ENCODE measurements at regions of chr1 and their contacts with region 1.

Region 1: GRCh38 chr1:201559679-201560162 is 20.8 kb downstream of the NAV1 start:
- DNase-seq: peak; percentile 68
- H3K4me3 Mint-ChIP-seq: no peak overlapping the region
- H3K27ac Mint-ChIP-seq: no peak overlapping the region
- H3K4me1 Mint-ChIP-seq: peaks cover 9% of the 10 kb centered on the region
- H3K27me3 Mint-ChIP-seq: peaks cover 2% of the 10 kb centered on the region

Region 2: DNA sequence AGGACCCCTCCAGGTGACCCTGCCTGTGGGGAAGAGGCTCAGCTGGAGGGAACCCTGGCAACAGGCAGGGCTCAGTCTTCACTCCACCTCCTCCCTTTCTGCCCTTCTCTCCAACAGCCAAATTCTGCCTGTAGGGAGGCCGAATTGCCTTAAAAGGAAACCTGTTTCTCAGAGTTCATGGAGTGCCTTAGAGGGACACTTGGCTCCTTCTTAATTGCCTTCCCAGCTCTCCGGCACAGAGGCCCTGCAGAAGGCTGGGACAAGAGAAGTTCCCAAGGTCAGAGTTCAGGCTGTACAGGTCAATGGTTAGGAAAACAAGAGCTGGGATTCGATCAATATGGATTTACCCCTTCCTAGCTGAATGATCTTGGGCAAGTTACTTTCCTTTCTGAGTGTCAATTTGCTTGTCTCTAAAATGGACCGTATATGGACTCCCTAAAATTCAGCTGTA is 59.0 kb before region 1 on chr1:
- CTCF ChIA-PET with region 1: no interaction called
- POLR2A ChIA-PET with region 1: no interaction called
- DNase-seq: no peak
- H3K4me3 Mint-ChIP-seq: no peak overlapping the region
- H3K27ac Mint-ChIP-seq: no peak overlapping the region
- H3K4me1 Mint-ChIP-seq: peaks cover 25% of the 10 kb centered on the region
- H3K27me3 Mint-ChIP-seq: no peaks in the 10 kb centered on the region

Region 3: DNA sequence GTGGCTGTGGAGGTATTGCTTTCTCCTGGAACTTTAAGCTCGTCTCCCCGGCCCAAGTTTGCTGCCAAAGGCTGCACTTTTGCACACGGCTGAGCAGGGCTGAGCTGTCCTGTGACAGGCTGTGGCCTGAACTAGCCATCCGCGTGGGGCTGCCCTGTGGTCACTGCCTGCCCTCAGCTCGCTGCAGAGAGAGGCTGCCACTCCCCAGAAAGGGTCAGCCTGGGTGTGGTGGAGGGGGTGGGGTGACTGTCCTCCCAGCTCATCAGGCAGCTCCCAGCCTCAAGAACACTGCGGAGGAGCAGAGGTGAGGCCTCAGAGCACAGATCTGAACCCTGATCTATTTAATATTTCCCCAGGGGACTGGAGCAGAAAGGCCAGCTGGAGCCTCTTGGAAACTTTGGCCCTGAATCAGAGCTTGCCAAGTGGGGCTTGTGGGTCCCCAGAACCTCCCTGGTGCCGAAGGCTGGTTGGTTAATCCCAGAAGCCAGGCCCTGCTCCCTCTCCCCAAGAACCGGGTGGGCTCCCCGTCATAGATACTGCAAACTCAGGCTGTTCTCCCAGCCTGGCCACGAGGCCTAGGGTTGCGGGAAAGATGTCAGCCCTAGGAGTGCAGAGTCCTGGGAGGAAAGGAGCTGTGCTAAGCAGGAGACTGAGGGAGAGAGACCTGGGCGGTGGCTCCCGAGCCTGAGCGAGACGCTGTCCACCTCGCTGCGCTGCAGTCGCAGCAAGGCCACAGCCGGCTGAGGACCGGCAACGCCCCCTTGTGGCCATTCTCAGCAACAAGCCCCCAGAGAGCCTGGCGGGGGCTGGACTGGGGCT is 144.1 kb after region 1 on chr1:
- CTCF ChIA-PET with region 1: interaction called, 33 read pairs
- POLR2A ChIA-PET with region 1: no interaction called
- DNase-seq: peak; percentile 68
- H3K4me3 Mint-ChIP-seq: no peak overlapping the region
- H3K27ac Mint-ChIP-seq: no peak overlapping the region
- H3K4me1 Mint-ChIP-seq: no peaks in the 10 kb centered on the region
- H3K27me3 Mint-ChIP-seq: peaks cover 4% of the 10 kb centered on the region

Region 4: DNA sequence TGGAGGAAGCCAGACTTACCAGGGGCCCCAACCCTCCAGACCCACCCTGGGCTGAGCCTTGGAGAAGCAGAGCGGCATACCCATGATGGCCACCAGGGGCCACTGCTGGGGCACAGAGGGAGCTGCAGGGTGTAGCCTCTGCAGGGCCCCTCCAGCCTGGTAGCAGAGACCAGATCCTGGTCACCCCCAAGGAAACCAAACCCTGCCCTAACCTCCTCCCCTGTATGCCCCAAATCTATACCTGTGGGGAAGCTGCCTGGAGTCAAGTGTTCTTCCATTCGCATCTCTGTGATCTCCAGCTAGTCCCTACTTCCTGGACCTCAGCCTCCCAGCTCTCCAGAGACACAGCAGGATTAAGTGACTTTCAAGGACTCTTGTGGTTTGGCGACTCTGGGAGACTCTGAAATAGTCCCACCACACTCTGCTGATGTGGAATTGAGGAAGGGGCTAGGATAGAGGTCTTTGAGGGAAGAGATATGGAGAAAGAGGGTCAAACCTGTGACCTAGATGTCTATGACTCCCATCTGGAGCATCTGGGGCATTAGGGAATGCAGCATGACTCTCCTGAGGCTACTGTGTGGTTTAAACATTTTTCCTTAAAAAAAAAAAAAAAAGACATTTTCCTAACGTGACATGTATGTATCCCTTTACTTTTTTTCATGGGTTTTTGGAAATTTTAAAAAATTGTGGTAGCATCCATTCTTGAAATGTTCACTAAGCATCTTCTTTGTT is 150.0 kb after region 1 on chr1:
- CTCF ChIA-PET with region 1: interaction called, 33 read pairs
- POLR2A ChIA-PET with region 1: no interaction called
- DNase-seq: peak; percentile 61
- H3K4me3 Mint-ChIP-seq: no peak overlapping the region
- H3K27ac Mint-ChIP-seq: no peak overlapping the region
- H3K4me1 Mint-ChIP-seq: peaks cover 2% of the 10 kb centered on the region
- H3K27me3 Mint-ChIP-seq: no peaks in the 10 kb centered on the region

Region 5: DNA sequence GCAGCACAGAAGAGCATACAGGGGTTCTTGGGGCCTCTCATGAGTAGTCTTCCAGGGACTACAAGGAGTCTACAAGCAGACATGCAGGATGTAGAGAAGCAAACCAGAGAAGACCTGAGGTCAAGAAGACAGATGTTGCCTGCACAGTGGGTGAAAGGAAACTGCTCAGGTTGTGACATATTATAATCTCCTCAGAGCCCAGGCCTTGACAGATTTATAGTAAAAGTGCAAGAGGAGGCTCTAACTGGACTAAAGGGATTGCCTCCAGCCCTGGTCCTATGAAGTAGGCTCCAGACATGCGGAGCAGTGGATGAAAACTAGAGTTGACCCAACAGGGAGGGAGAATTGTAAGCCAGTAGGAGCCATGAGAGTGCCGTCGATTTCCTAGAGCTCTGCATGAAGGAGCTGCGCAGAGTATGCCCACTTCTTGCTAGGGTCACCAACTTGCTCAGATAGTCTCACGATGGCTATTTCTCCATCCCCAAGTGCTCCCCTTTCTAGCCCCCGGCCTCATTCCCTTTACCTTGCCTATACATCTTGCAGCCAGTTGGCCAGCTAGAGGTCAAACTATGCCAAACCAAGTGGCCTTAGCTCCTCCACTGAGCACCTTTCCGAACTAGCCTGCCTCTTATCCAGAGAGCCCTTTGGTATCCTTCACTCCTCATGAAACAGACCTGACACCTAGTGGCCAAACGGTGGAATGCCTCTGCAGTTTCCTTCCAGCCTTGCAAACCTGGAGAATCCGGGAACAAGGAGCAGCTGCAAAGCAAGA is 233.0 kb after region 1 on chr1:
- CTCF ChIA-PET with region 1: interaction called, 44 read pairs
- POLR2A ChIA-PET with region 1: no interaction called
- DNase-seq: peak; percentile 54
- H3K4me3 Mint-ChIP-seq: no peak overlapping the region
- H3K27ac Mint-ChIP-seq: no peak overlapping the region
- H3K4me1 Mint-ChIP-seq: peaks cover 15% of the 10 kb centered on the region
- H3K27me3 Mint-ChIP-seq: peaks cover 2% of the 10 kb centered on the region

Measured in activated CD4-positive, alpha-beta memory T cell treated with anti-CD3 and anti-CD28 coated beads, Interleukin-2, amount 10 ng/mL, durations not matched to agents 7 days and 5 days (primary cell).